PC-3 (cell line): ENCODE measurements at regions of chr4 and their contacts with region 1.

Region 1: DNA sequence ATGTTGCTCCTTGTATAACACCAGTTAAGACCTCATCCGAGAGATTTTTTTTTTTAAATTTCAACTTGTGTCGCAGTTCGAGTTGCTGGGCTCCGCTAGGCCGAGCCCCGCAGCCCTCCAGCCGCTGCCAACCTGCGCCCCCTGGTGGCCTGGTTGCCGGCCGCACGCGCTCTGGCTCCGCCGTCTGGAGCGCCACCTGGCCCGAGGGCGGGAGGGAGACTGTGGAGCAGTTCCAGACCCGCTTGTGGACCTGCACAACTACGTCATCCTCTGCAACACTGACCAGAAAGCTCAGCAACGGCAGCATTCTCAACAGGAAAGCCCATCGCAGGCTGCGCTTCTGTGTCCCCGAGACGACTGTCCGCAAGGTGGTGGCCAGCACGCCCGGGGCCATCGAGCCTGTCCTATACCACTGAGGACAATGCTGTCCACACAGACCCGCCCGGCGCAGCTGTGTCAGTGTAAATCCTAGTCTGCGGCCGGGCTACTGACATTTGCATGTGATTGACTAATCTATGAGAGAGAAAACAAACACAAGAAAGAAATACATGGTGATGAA is 39.1 kb downstream of the ARL9 start:
- DNase-seq: peak; percentile 95
- ATAC-seq: peak; percentile 97
- H3K4me3 ChIP-seq: peak overlapping the region; percentile 69
- H3K27ac ChIP-seq: no peak overlapping the region
- H3K4me1 ChIP-seq: peaks cover 5% of the 10 kb centered on the region; the same call in 1 of the 2 replicates
- H3K27me3 ChIP-seq: no peaks in the 10 kb centered on the region
- CTCF ChIP-seq: peak; percentile 99

Region 2: DNA sequence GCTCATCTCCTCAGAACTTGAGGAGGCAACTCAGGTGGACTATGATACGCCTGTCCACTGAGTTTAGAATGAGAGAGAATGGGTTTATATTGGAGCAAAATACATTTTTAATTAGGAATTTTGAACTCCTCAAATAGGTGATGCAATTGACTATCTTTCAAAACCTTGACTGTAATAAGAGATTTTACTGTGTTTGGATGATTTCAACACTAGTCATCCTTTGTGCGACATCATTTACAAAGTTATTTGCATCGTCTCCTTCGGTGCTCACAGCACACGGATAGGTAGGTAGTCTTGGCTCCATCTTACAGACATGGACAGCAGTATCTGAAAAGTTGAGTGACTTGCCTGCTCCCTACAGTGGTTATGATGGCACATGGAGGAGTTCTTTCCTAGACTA is 224.4 kb before region 1 on chr4:
- CTCF ChIA-PET with region 1: no interaction called
- POLR2A ChIA-PET with region 1: no interaction called
- intact Hi-C with region 1: loop called (anchors 10 kb)
- DNase-seq: peak; percentile 72
- ATAC-seq: peak; percentile 54
- H3K4me3 ChIP-seq: no peak overlapping the region
- H3K27ac ChIP-seq: no peak overlapping the region
- H3K4me1 ChIP-seq: no peaks in the 10 kb centered on the region
- H3K27me3 ChIP-seq: no peaks in the 10 kb centered on the region
- CTCF ChIP-seq: no peak

Region 3: GRCh38 chr4:56387023-56388001 is 157.3 kb before region 1 on chr4 and contains the start of gene AASDH:
- CTCF ChIA-PET with region 1: no interaction called
- POLR2A ChIA-PET with region 1: no interaction called
- intact Hi-C with region 1: loop called (anchors 10 kb)
- DNase-seq: peak; percentile 98
- ATAC-seq: peak; percentile 90
- H3K4me3 ChIP-seq: peak within 1 kb of the TSS; percentile 88
- H3K27ac ChIP-seq: peak within 1 kb of the TSS; percentile 86
- H3K4me1 ChIP-seq: peaks cover 21% of the 10 kb centered on the region
- H3K27me3 ChIP-seq: no peaks in the 10 kb centered on the region
- CTCF ChIP-seq: no peak
- total RNA-seq, gene AASDH: 7.5 and 8.8 TPM in 2 replicates

Region 4: GRCh38 chr4:56424697-56425514 is 119.7 kb before region 1 on chr4:
- CTCF ChIA-PET with region 1: no interaction called
- POLR2A ChIA-PET with region 1: no interaction called
- intact Hi-C with region 1: loop called (anchors 1 kb)
- DNase-seq: peak; percentile 61
- ATAC-seq: peak; percentile 59
- H3K4me3 ChIP-seq: no peak overlapping the region
- H3K27ac ChIP-seq: no peak overlapping the region
- H3K4me1 ChIP-seq: no peaks in the 10 kb centered on the region
- H3K27me3 ChIP-seq: no peaks in the 10 kb centered on the region
- CTCF ChIP-seq: peak; percentile 93

Region 5: GRCh38 chr4:56475917-56476316 is 68.7 kb before region 1 on chr4:
- CTCF ChIA-PET with region 1: no interaction called
- POLR2A ChIA-PET with region 1: no interaction called
- intact Hi-C with region 1: loop called (anchors 5 kb)
- DNase-seq: no peak
- ATAC-seq: no peak
- H3K4me3 ChIP-seq: no peak overlapping the region
- H3K27ac ChIP-seq: no peak overlapping the region
- H3K4me1 ChIP-seq: no peaks in the 10 kb centered on the region
- H3K27me3 ChIP-seq: no peaks in the 10 kb centered on the region
- CTCF ChIP-seq: no peak

Region 6: DNA sequence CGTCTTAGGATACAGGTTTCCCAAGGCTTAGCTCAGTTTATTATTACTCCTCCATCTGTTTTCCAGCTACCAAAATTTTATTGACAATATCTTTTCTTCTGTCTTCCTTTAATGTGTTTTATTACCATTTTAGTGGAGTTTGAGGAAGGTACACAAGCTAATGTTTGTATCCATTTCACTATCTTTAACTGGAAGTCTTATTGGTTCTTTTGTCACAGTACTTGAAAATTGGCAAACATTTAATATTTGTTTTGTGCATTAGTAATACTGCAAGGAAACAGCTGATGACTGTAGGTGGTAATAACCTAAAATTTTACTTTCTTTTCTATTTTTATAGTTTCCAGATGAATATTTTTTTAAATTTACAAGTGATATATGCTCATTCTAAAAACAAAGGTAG is 48.4 kb before region 1 on chr4:
- CTCF ChIA-PET with region 1: interaction called, 7 read pairs
- POLR2A ChIA-PET with region 1: no interaction called
- intact Hi-C with region 1: loop called (anchors 1 kb)
- DNase-seq: peak; percentile 59
- ATAC-seq: peak; percentile 92
- H3K4me3 ChIP-seq: no peak overlapping the region
- H3K27ac ChIP-seq: 0 out of 2 replicates have a peak overlapping the region, but pooled peaks have one; percentile 5
- H3K4me1 ChIP-seq: peaks cover 12% of the 10 kb centered on the region
- H3K27me3 ChIP-seq: no peaks in the 10 kb centered on the region
- CTCF ChIP-seq: no peak

Region 7: DNA sequence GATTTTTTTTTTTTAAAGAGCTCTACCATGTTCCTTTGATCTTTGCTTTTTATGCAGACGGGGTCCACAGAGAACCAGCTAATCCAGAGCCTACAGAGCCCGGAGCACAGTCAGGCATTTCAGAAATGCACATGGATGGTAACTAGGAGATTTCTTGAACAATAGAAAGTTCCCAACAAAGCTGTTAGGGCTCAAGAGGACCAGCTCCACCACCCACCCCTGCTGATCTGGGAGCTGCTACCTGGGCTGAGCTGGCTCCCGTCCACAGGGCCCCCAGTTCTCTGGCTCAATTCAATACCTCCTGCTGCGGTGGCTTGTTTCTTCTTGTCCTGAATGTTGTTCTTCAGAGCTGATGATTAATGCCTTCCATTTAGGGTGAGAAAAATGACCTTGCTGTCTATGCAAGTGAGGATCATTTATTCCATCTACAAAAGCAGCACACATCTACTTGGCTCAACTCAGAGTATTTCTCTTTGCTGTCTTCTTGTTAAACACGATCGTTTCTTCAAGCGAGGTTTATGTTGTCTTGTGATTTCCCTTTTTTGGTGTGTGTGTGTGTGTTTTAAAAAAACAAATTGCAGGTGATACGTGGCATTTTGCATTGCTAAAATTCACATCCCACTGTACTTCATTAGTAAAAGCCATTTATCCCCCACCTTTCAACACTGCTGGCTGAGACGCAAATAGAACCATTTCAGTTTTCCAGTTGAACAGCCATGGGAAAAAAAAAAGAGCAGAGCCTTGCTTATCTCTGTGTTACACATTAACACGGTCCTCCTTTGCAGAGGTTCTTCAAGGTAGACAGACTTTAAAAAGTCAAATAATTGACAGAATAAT is 534.3 kb after region 1 on chr4:
- CTCF ChIA-PET with region 1: no interaction called
- POLR2A ChIA-PET with region 1: no interaction called
- intact Hi-C with region 1: no loop called
- DNase-seq: no peak
- ATAC-seq: no peak
- H3K4me3 ChIP-seq: no peak overlapping the region
- H3K27ac ChIP-seq: no peak overlapping the region
- H3K4me1 ChIP-seq: peaks cover 15% of the 10 kb centered on the region
- H3K27me3 ChIP-seq: no peaks in the 10 kb centered on the region
- CTCF ChIP-seq: no peak